Caco-2 (cell line): ENCODE measurements at regions of chr6 and their contacts with region 1.

Region 1: GRCh38 chr6:43937236-43938164 is 167.5 kb downstream of the VEGFA start:
- DNase-seq: peak; percentile 54 to 74
- H3K4me3 ChIP-seq: no peak overlapping the region
- H3K4me3 Mint-ChIP-seq: no peak overlapping the region
- H3K27ac Mint-ChIP-seq: peak overlapping the region; percentile 61
- H3K4me1 ChIP-seq: peaks cover 33% of the 10 kb centered on the region
- H3K4me1 Mint-ChIP-seq: peaks cover 48% of the 10 kb centered on the region
- H3K27me3 ChIP-seq: no peaks in the 10 kb centered on the region
- H3K27me3 Mint-ChIP-seq: no peaks in the 10 kb centered on the region
- CTCF ChIP-seq: no peak

Region 2: GRCh38 chr6:43708860-43709653 is 228.4 kb before region 1 on chr6:
- CTCF ChIA-PET with region 1: interaction called, 12 read pairs
- POLR2A ChIA-PET with region 1: no interaction called
- intact Hi-C with region 1: no loop called
- DNase-seq: no peak
- H3K4me3 ChIP-seq: no peak overlapping the region
- H3K4me3 Mint-ChIP-seq: no peak overlapping the region
- H3K27ac Mint-ChIP-seq: no peak overlapping the region
- H3K4me1 ChIP-seq: peaks cover 8% of the 10 kb centered on the region
- H3K4me1 Mint-ChIP-seq: peaks cover 15% of the 10 kb centered on the region
- H3K27me3 ChIP-seq: no peaks in the 10 kb centered on the region
- H3K27me3 Mint-ChIP-seq: peaks cover 4% of the 10 kb centered on the region
- CTCF ChIP-seq: no peak